Heart right ventricle (tissue), 16 donors: ENCODE measurements at regions of chr3 and their contacts with region 1.

Region 1: GRCh38 chr3:41198950-41199865 is at the start of gene CTNNB1:
- DNase-seq: peak; percentile 93 to 95
- ATAC-seq: peak; percentile 87 to 98 (median 93)
- H3K4me3 ChIP-seq: peak within 1 kb of the TSS; percentile 63 to 96 (median 80)
- H3K27ac ChIP-seq: peak within 1 kb of the TSS; percentile 89 to 99 (median 98)
- H3K4me1 ChIP-seq: peaks cover 0 to 42% (median 35%) of the 10 kb centered on the region in 9 donors
- H3K27me3 ChIP-seq: no peaks in the 10 kb centered on the region
- CTCF ChIP-seq: peak in 6 of 9 donors; percentile 7 to 43 (median 23)
- total RNA-seq, gene CTNNB1: 148 to 218 (median 181) TPM

Region 2: DNA sequence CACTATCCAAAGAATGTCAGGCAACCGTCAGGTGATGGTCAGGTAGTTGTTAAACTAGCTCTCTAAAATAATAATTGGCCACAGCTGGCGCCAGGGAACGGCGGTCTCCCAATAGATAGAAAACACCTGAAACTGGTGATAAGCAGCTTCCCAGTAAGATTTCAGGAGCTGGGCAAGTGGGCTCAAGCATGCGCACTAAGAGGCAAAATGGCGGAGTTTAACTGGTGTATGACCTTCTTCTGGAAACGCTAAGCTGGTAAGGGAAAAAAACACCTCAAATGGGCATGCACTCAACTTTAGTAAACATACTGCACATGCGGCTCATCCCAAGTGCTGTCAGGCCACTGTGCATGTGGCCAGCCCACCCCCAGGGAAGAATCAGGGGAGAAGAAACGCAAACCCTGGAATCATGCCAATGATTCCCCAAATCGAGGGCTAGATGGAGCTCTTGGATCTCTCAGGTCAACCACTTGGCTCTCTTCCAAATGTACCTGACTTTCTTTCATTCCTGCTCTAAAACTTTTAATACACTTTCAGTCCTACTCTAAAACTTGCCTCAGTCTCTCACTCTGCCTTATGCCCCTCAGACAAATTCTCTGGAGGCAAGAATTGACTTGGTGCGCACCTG is 479.4 kb before region 1 on chr3:
- intact Hi-C with region 1: loop called in 3 of 10 experiments (anchors 2 to 10 kb)
- DNase-seq: peak in 1 of 2 donors; percentile 29
- ATAC-seq: peak in 1 of 8 donors; percentile 35
- H3K4me3 ChIP-seq: no peak overlapping the region
- H3K27ac ChIP-seq: no peak overlapping the region
- H3K4me1 ChIP-seq: peaks cover 0 to 11% (median under 1%) of the 10 kb centered on the region in 9 donors
- H3K27me3 ChIP-seq: no peaks in the 10 kb centered on the region
- CTCF ChIP-seq: peak in 7 of 9 donors; percentile 30 to 66 (median 47)

Region 3: DNA sequence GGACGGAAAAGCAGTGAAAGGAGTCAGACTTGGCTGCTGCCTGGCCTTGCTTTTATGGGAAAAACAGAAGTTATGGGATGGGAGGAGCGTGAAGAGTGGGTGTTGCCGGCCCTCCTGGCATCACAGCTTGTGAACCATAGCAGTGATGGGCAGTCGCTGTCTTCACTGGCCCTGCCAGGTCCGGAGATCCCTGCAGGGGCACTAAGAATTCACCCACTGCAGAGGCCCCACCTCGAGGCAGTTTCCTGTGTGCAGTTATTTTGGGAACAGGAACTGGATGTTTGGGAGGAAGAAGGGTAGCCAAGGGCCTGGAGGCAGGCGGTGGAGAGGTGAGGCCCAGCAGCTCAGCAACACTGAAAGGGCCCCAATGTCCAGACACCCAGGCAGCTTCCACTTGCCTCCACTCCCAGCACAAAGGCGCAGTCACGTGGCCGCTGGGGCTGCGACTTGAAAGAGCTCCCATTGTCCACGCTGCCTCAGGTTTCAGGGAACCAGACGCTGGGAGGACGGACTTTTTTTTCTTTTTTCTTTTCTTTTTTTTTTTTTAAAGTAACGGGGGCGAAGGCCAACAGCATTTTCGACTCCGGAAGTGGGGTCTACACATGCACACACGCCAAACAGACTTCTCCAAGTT is 418.8 kb before region 1 on chr3:
- intact Hi-C with region 1: loop called in 4 of 10 experiments (anchors 5 to 10 kb)
- DNase-seq: peak; percentile 78 to 86
- ATAC-seq: peak; percentile 84 to 93 (median 88)
- H3K4me3 ChIP-seq: peak overlapping the region in 7 of 10 donors; percentile 3 to 33 (median 22)
- H3K27ac ChIP-seq: peak overlapping the region; percentile 78 to 88 (median 82)
- H3K4me1 ChIP-seq: peaks cover 15 to 34% (median 23%) of the 10 kb centered on the region in 9 donors
- H3K27me3 ChIP-seq: no peaks in the 10 kb centered on the region
- CTCF ChIP-seq: peak in 2 of 9 donors; percentile 10 to 26

Region 4: GRCh38 chr3:40877631-40878463 is 321.4 kb before region 1 on chr3:
- intact Hi-C with region 1: loop called in 4 of 10 experiments (anchors 5 to 10 kb)
- DNase-seq: peak; percentile 69 to 81
- ATAC-seq: peak; percentile 81 to 94 (median 91)
- H3K4me3 ChIP-seq: peak overlapping the region in 1 of 10 donors; percentile 23
- H3K27ac ChIP-seq: peak overlapping the region; percentile 60 to 88 (median 79)
- H3K4me1 ChIP-seq: peaks cover 18 to 51% (median 32%) of the 10 kb centered on the region in 9 donors
- H3K27me3 ChIP-seq: no peaks in the 10 kb centered on the region
- CTCF ChIP-seq: no peak

Region 5: GRCh38 chr3:41111016-41111415 is 88.2 kb before region 1 on chr3:
- intact Hi-C with region 1: loop called in 2 of 10 experiments (anchors 5 kb)
- DNase-seq: no peak
- ATAC-seq: no peak
- H3K4me3 ChIP-seq: no peak overlapping the region
- H3K27ac ChIP-seq: no peak overlapping the region
- H3K4me1 ChIP-seq: no peaks in the 10 kb centered on the region
- H3K27me3 ChIP-seq: no peaks in the 10 kb centered on the region
- CTCF ChIP-seq: no peak